ENCODE measurements at regions of chr17 and their contacts with region 1.

Region 1: DNA sequence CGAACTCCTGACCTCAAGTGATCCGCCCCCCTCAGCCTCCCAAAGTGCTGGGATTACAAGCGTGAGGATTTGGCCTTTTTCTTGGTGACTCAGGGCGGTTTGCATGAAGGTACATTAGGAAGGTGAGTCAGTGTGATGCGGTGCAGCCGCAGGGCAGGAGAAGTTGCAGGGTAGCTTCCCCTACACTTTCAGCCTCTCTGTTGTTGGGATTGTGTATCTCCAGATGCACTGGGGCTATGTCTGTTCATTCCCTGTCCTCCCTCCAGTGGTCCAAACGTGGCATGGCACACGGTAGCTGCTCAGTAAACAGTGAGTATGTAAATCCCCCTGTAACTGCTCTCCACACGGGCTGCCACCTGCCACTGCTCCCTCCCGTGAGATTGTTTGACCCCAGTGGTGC is 109.1 kb upstream of the CDC42EP4 start:
- DNase-seq: no peak
- ATAC-seq: no peak
- H3K4me3 ChIP-seq: no peak overlapping the region
- H3K4me3 Mint-ChIP-seq: no peak overlapping the region
- H3K27ac ChIP-seq: no peak overlapping the region
- H3K27ac Mint-ChIP-seq: no peak overlapping the region
- H3K4me1 ChIP-seq: no peaks in the 10 kb centered on the region
- H3K4me1 Mint-ChIP-seq: no peaks in the 10 kb centered on the region
- H3K27me3 ChIP-seq: no peaks in the 10 kb centered on the region
- H3K27me3 Mint-ChIP-seq: no peaks in the 10 kb centered on the region
- CTCF ChIP-seq: no peak

Region 2: GRCh38 chr17:73410586-73411312 is 10.1 kb before region 1 on chr17:
- CTCF ChIA-PET with region 1: no interaction called
- POLR2A ChIA-PET with region 1: no interaction called
- intact Hi-C with region 1: loop called in 1 of 2 experiments (anchors 1 kb)
- DNase-seq: no peak
- ATAC-seq: no peak
- H3K4me3 ChIP-seq: no peak overlapping the region
- H3K4me3 Mint-ChIP-seq: no peak overlapping the region
- H3K27ac ChIP-seq: no peak overlapping the region
- H3K27ac Mint-ChIP-seq: peak overlapping the region; percentile 22
- H3K4me1 ChIP-seq: no peaks in the 10 kb centered on the region
- H3K4me1 Mint-ChIP-seq: no peaks in the 10 kb centered on the region
- H3K27me3 ChIP-seq: no peaks in the 10 kb centered on the region
- H3K27me3 Mint-ChIP-seq: no peaks in the 10 kb centered on the region
- CTCF ChIP-seq: no peak

Measured in CD8-positive, alpha-beta T cell (primary cell).